Activated CD4-positive, alpha-beta memory T cell treated with anti-CD3 and anti-CD28 coated beads for 36 hours (primary cell): ENCODE measurements at regions of chr4 and their contacts with region 1.

Region 1: DNA sequence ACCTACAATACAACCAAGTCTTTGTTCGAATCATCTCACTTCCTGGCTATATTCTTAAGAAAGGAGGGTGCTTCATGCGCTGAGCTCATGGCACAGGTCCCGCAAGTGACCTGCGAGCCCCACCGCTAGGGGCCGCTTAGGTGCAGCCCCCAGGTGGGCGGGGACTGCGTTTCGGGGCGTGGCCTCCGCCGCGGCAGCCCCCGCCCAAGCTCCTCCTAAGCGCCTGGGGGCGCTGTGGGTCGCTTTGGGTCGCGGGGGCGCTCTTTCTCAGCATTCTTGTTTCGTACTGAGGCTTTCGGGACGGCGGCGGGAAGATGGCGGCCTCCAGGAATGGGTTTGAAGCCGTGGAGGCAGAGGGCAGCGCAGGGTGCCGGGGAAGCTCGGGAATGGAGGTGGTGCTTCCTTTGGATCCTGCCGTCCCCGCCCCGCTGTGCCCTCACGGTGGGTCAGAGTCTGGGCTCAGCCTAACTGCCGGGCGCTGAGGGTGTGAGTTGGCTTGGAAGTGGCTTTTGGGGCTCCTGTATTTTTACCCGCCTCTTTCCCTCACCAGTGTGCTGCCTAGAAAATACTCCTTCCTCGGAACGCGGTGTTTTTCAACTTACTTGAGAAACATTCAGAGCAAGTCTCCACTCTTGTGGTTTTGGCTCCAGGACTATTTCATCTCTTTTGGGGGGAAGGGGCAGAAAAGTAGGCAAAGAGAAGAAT is at the start of gene ZCCHC4:
- DNase-seq: peak; percentile 91
- H3K4me3 Mint-ChIP-seq: peak within 1 kb of the TSS; percentile 99
- H3K27ac Mint-ChIP-seq: peak within 1 kb of the TSS; percentile 90
- H3K4me1 Mint-ChIP-seq: peaks cover 19% of the 10 kb centered on the region
- H3K27me3 Mint-ChIP-seq: peaks cover 2% of the 10 kb centered on the region
- total RNA-seq, gene ZCCHC4: 10.6 to 11.5 TPM

Region 2: GRCh38 chr4:24584175-24584850 is 728.3 kb before region 1 on chr4 and contains the start of gene DHX15:
- CTCF ChIA-PET with region 1: interaction called, 5 read pairs
- POLR2A ChIA-PET with region 1: interaction called, 4 read pairs
- intact Hi-C with region 1: loop called (anchors 5 kb)
- DNase-seq: peak; percentile 95
- H3K4me3 Mint-ChIP-seq: peak within 1 kb of the TSS; percentile 94
- H3K27ac Mint-ChIP-seq: peak within 1 kb of the TSS; percentile 95
- H3K4me1 Mint-ChIP-seq: peaks cover 32% of the 10 kb centered on the region
- H3K27me3 Mint-ChIP-seq: peaks cover 3% of the 10 kb centered on the region
- total RNA-seq, gene DHX15: 169 to 172 TPM

Region 3: GRCh38 chr4:25180524-25181131 is 132.0 kb before region 1 on chr4:
- CTCF ChIA-PET with region 1: interaction called, 16 read pairs
- POLR2A ChIA-PET with region 1: no interaction called
- intact Hi-C with region 1: loop called (anchors 5 kb)
- DNase-seq: peak; percentile 43
- H3K4me3 Mint-ChIP-seq: no peak overlapping the region
- H3K27ac Mint-ChIP-seq: no peak overlapping the region
- H3K4me1 Mint-ChIP-seq: peaks cover 26% of the 10 kb centered on the region
- H3K27me3 Mint-ChIP-seq: no peaks in the 10 kb centered on the region

Region 4: DNA sequence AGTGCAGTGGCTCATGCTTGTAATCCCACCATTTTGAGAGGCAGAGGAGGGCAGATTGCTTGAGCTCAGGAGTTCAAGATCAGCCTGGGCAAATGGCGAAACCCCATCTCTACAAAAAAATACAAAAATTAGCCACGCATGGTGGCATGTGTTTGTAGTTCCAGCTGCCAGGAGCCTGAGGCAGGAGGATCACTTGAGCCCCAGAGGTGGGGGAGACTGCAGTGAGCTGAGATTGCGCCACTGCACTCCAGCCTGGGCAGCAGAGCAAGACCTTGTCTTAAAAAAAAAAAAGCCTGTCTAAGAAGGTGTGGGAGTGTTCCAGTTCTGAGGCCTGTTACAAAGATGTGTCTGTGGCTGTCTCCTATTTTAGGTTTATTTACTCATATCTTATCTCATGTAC is 40.8 kb before region 1 on chr4:
- CTCF ChIA-PET with region 1: interaction called, 11 read pairs
- POLR2A ChIA-PET with region 1: no interaction called
- intact Hi-C with region 1: no loop called
- DNase-seq: no peak
- H3K4me3 Mint-ChIP-seq: no peak overlapping the region
- H3K27ac Mint-ChIP-seq: no peak overlapping the region
- H3K4me1 Mint-ChIP-seq: no peaks in the 10 kb centered on the region
- H3K27me3 Mint-ChIP-seq: no peaks in the 10 kb centered on the region

Region 5: DNA sequence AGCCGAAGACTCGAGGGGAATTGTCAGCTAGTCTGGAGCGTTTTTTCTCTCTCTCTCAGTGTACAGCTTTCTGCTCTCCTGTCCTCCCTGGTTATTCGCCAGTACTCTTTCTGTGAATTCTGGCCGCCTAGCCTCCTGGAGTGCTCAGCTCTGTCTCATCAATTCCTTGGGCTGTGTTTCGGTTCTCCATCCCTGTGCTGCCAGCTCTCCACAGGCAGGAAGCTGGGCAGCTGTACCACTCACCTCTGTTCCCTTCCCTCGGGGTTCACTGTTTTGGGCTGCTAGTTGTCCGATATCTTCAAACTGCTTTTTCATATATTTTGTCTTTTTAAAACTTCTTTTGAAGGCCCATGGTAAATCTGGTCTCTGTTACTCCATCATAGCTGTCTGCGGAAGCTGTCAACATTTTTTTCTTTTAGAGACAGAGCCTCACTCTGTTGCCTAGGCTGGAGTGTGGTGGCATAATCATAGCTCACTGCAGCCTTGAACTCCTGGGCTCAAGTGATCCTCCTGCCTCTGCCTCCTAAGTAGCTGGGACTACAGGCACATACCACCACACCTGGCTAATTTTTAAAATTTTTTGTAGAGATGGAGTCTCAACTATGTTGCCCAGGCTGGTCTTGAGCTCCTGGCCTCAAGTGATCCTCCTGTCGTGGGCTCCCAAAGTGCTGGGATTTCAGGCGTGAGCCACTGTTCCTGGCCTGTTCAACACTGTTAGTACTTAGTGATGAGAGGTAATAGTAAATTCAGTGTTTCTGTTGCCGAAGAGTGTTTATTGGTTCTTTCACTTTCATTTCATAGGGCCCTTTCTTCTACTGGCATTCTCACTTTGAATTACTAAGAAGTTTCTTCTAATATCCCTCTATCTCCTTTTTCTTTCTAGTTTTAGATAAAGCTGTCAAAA is 18.5 kb after region 1 on chr4:
- CTCF ChIA-PET with region 1: interaction called, 25 read pairs
- POLR2A ChIA-PET with region 1: interaction called, 11 read pairs
- intact Hi-C with region 1: loop called (anchors 2 kb)
- DNase-seq: no peak
- H3K4me3 Mint-ChIP-seq: peak overlapping the region; percentile 75
- H3K27ac Mint-ChIP-seq: peak overlapping the region; percentile 86
- H3K4me1 Mint-ChIP-seq: peaks cover 14% of the 10 kb centered on the region
- H3K27me3 Mint-ChIP-seq: no peaks in the 10 kb centered on the region

Region 6: GRCh38 chr4:25367004-25367621 is 54.5 kb after region 1 on chr4:
- CTCF ChIA-PET with region 1: interaction called, 88 read pairs
- POLR2A ChIA-PET with region 1: no interaction called
- intact Hi-C with region 1: loop called (anchors 2 kb)
- DNase-seq: no peak
- H3K4me3 Mint-ChIP-seq: no peak overlapping the region
- H3K27ac Mint-ChIP-seq: no peak overlapping the region
- H3K4me1 Mint-ChIP-seq: no peaks in the 10 kb centered on the region
- H3K27me3 Mint-ChIP-seq: no peaks in the 10 kb centered on the region

Region 7: GRCh38 chr4:25913851-25914669 is 601.4 kb after region 1 on chr4 and contains the start of gene SMIM20:
- CTCF ChIA-PET with region 1: no interaction called
- POLR2A ChIA-PET with region 1: no interaction called
- intact Hi-C with region 1: loop called (anchors 10 kb)
- DNase-seq: peak; percentile 93
- H3K4me3 Mint-ChIP-seq: peak within 1 kb of the TSS; percentile 87
- H3K27ac Mint-ChIP-seq: peak within 1 kb of the TSS; percentile 94
- H3K4me1 Mint-ChIP-seq: peaks cover 17% of the 10 kb centered on the region
- H3K27me3 Mint-ChIP-seq: no peaks in the 10 kb centered on the region
- total RNA-seq, gene SMIM20: 26.0 to 28.0 TPM